A549 (cell line): ENCODE measurements at regions of chr1 and their contacts with region 1.

Region 1: DNA sequence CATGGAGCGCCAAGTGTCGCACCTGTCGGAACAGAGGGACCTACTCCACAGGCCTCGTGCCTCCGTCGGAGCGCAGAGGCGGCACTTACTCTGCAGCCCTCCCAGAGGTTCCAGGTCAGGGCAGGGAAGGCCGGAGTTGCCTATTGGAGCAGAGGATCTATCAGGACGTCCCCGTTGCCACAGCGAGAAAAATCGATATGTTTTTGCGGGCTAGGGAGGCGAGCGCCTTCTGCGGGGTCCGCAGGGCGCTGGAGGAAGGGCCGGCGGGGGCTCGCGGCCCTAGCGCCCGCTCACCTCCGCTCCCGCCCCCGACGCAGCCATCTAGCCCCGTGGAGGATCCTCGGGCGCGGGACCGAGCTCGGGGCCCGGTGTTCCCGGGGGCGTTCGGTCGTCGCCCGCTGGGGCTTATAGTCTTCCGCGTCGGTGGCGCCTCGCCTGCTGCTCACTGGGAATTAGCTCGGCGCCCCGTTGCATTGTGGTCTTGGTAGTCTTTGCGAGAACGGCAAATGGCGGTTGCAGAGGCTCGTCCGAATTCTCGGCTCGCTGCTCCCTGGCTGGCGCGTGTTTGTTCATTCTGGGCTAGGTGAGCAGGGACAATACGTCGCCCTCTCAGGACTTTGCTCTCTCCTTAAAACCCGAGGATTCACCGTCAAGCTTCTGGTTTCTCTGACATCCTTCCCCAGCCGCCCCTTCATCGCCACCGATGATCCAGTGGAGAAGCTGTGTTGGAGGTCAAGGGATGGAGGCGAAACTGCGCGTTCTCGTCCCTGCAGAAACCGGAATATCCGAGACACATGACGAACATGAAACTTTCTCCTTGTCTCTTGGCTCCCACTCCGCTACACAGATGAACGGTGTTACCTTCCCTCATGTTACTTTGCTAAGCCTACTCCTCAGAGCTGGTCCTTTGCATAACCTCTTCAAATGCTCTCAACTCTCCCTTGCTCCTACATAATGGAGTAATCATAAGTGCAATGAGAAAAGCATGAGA is at the start of gene JTB:
- DNase-seq: peak; percentile 82 to 90
- ATAC-seq: peak; percentile 95 to 98
- H3K4me3 ChIP-seq: peak within 1 kb of the TSS; percentile 92
- H3K27ac ChIP-seq: peak within 1 kb of the TSS; percentile 88 to 95
- H3K4me1 ChIP-seq: peaks cover 18% of the 10 kb centered on the region
- CTCF ChIP-seq: no peak
- EP300 ChIP-seq: no peak
- POLR2A ChIP-seq: peak; percentile 56
- RAD21 ChIP-seq: no peak
- polyA plus RNA-seq, gene JTB: 162 and 178 TPM in 2 replicates

Region 2: DNA sequence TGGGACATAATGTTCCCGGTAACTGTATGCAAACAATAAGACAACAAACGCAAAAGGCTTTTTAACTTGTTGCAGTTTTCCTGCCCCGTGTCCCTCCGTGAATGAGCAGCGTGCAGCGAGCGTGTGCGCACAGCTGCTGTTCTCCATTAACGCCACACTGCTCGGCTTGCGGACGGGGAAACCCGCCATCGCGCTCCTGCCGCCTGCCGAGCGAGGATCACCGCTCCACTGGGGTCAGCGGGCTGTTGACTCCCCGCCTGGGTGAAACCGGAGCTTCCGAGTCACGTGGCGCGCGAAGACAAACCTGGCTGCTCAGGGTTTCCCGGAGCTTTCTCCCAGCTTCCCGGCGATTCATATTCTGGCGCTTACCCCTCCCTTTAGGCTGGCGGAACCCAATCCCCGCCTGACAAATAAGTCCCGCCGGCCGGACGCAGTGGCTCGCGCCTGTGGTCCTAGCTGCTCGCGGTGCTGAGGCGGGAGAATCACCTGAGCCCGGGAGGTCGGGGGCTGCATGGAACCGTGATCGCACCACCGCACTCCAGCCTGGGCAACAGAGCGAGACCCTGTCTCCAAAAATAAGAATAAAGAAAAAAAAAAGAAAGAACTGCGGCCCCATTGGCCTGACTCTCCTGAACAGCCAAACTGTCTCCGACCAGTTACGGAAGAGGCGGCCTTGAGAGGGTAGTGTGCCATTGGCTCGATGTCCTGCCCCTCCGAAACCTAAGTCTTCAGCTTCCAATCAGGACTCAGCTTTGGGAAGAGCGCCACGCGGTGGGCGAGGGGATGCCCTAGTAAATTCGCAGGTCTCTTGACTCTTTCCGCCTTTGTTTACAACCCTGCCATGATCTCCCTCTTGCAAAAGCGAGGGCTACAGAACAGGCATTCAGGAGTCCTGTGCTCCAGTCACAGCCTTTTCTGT is 10.2 kb before region 1 on chr1 and contains the start of gene CREB3L4:
- CTCF ChIA-PET with region 1: interaction called, 33 read pairs
- POLR2A ChIA-PET with region 1: interaction called, 78 read pairs
- DNase-seq: peak; percentile 92 to 99
- ATAC-seq: peak; percentile 79 to 89
- H3K4me3 ChIP-seq: peak within 1 kb of the TSS; percentile 64
- H3K27ac ChIP-seq: peak within 1 kb of the TSS; percentile 90 to 92
- H3K4me1 ChIP-seq: peaks cover 19% of the 10 kb centered on the region
- CTCF ChIP-seq: peak; percentile 29; the same call in 1 of the 3 replicates
- EP300 ChIP-seq: no peak
- POLR2A ChIP-seq: peak; percentile 87
- RAD21 ChIP-seq: no peak; a peak in 1 of 5 replicates
- polyA plus RNA-seq, gene CREB3L4: 14.3 and 18.0 TPM in 2 replicates

Region 3: GRCh38 chr1:154253671-154254070 is 276.1 kb after region 1 on chr1:
- CTCF ChIA-PET with region 1: no interaction called
- POLR2A ChIA-PET with region 1: no interaction called
- DNase-seq: no peak
- ATAC-seq: no peak
- H3K4me3 ChIP-seq: no peak overlapping the region
- H3K27ac ChIP-seq: no peak overlapping the region
- H3K4me1 ChIP-seq: no peaks in the 10 kb centered on the region
- CTCF ChIP-seq: no peak
- EP300 ChIP-seq: no peak
- POLR2A ChIP-seq: no peak
- RAD21 ChIP-seq: no peak